Panc1 (cell line): ENCODE measurements at regions of chr4 and their contacts with region 1.

Region 1: DNA sequence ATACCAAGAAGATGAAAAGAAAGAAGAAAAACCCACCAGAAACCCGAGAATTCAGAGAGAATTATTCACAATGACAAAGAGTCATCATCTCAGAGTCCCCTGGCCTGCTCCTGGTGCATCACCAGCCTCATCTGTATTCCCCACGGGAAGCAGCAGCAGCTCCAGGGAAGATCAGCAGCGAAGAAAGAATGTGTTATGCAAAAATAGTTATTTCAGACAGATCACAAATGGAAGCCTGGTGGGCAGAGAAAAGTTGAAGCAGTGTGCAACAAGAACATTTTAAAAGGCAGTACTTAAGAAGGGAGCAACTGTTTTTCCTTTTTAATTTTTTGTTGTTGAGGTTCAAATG is 189.2 kb downstream of the PPP3CA start:
- DNase-seq: no peak
- ATAC-seq: no peak
- H3K4me3 ChIP-seq: no peak overlapping the region
- H3K27ac ChIP-seq: no peak overlapping the region
- H3K4me1 ChIP-seq: no peaks in the 10 kb centered on the region; the same call in 1 of the 2 replicates
- H3K27me3 ChIP-seq: no peaks in the 10 kb centered on the region
- CTCF ChIP-seq: no peak

Region 2: DNA sequence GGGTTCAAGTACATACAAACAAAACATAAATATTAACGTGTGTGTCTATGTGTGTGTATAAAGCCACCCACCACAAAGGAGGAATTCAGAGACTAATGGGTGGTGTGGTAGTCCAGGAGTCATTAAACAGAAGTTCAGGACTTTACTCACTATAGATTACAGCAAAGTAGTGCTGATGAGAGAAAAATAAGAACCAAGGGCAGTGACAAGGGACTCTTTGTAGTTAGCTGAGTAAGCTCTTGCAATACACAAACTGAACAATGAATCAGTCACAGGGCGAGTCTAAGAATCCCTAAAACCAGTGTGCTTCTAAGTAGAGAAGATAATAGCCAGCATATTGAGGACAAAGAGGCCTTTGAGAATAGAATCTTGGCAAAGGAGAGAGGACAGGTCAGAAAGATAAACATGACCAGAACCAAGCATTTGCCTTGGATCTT is 43.2 kb before region 1 on chr4:
- CTCF ChIA-PET with region 1: no interaction called
- POLR2A ChIA-PET with region 1: no interaction called
- in situ Hi-C with region 1: no loop called
- intact Hi-C with region 1: no loop called
- DNase-seq: peak; percentile 25
- ATAC-seq: peak; percentile 70
- H3K4me3 ChIP-seq: no peak overlapping the region
- H3K27ac ChIP-seq: no peak overlapping the region
- H3K4me1 ChIP-seq: no peaks in the 10 kb centered on the region
- H3K27me3 ChIP-seq: no peaks in the 10 kb centered on the region
- CTCF ChIP-seq: no peak

Region 3: GRCh38 chr4:101171747-101172146 is 13.6 kb after region 1 on chr4:
- CTCF ChIA-PET with region 1: no interaction called
- POLR2A ChIA-PET with region 1: interaction called, 19 read pairs
- in situ Hi-C with region 1: no loop called
- intact Hi-C with region 1: no loop called
- DNase-seq: no peak
- ATAC-seq: no peak
- H3K4me3 ChIP-seq: no peak overlapping the region
- H3K27ac ChIP-seq: no peak overlapping the region
- H3K4me1 ChIP-seq: no peaks in the 10 kb centered on the region
- H3K27me3 ChIP-seq: no peaks in the 10 kb centered on the region
- CTCF ChIP-seq: no peak

Region 4: GRCh38 chr4:101232074-101232776 is 74.1 kb after region 1 on chr4:
- CTCF ChIA-PET with region 1: no interaction called
- POLR2A ChIA-PET with region 1: no interaction called
- in situ Hi-C with region 1: no loop called
- intact Hi-C with region 1: no loop called
- DNase-seq: no peak
- ATAC-seq: no peak
- H3K4me3 ChIP-seq: no peak overlapping the region
- H3K27ac ChIP-seq: no peak overlapping the region
- H3K4me1 ChIP-seq: no peaks in the 10 kb centered on the region
- H3K27me3 ChIP-seq: no peaks in the 10 kb centered on the region
- CTCF ChIP-seq: no peak

Region 5: GRCh38 chr4:101415962-101416361 is 257.9 kb after region 1 on chr4:
- CTCF ChIA-PET with region 1: no interaction called
- POLR2A ChIA-PET with region 1: no interaction called
- in situ Hi-C with region 1: no loop called
- intact Hi-C with region 1: no loop called
- DNase-seq: no peak
- ATAC-seq: no peak
- H3K4me3 ChIP-seq: no peak overlapping the region
- H3K27ac ChIP-seq: no peak overlapping the region
- H3K4me1 ChIP-seq: no peaks in the 10 kb centered on the region
- H3K27me3 ChIP-seq: no peaks in the 10 kb centered on the region
- CTCF ChIP-seq: no peak